ENCODE measurements at regions of chr1 and their contacts with region 1.

Region 1: DNA sequence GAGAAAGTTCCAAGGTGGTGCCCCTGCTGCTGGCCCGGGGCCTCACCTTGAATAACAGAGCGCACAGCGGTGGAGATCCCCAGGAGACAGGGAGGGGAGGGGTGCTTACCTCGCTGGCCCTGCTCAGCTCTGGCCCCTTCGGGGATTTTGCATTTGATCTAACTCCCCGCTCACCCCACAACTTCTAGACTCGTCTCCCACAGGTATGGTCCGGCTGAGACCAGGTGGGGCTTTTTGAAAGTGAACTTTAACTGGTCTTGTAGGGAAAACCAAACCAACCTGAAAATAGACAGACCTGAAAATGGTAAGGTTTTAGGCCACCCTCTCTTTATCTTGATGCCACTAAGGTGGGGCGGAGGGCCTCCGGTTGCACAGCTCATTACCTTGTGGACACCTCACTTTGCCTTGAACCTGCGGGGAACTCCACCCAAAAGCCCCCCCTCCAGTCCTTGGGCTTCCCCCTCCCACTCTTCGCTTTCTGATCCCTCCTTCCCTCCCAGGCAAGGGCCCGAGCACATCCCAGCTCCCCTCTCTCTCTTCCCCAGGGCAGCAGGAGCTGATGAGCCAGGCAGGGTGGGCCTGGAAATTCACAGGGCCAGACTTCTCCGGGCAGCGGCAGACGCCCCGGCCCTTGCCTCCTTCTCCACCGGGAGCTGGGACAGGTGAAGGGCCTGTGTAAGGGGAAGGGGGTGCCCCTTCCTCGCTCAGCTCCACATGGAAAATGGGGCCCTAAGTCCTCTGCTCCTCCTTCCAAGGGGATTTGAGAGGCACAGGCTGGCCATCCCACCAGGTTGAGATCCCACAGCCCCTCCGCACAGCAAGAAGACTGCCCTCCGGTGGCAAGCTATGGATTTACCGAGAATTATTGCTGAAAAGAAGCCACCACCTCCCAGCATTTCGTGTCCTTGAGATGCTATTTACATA is 16.1 kb downstream of the TNFRSF8 start:
- DNase-seq: peak; percentile 37
- H3K4me3 ChIP-seq: no peak overlapping the region
- H3K27ac ChIP-seq: no peak overlapping the region
- H3K4me1 ChIP-seq: no peaks in the 10 kb centered on the region
- H3K27me3 ChIP-seq: peaks cover 0 to 7% of the 10 kb centered on the region in 2 experiments
- CTCF ChIP-seq: peak; percentile 59 to 72
- POLR2A ChIP-seq: no peak

Region 2: DNA sequence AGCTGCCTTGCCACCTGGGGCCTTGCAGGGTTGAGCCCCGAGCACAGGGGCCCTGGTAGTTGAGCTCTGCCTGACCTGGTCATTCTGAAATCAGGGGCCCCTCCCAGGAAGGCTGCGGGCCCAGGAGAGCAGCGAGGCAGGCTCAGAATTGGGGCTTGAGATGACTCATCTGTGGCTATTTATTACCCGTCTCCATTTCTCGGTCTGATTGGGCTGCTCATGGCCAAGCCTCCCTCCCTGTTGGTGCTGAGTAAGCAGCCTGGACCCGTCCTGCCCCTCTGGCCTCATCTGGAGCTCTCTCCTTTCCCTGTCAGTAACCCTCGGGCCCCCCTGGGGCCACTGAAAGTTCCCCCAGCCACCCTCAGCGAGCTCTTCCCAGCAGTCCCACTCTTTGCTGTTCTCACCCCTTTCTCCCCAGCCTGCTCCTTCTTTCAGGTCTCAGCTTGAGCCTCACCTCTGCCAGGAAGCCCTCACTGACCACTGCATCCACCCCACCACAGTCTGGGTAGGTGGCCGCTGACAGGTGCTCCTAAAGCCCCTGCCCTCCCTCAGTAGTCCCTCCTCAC is 27.1 kb before region 1 on chr1:
- CTCF ChIA-PET with region 1: interaction called, 13 read pairs
- POLR2A ChIA-PET with region 1: no interaction called
- dilution Hi-C with region 1: no loop called
- intact Hi-C with region 1: no loop called
- DNase-seq: no peak
- H3K4me3 ChIP-seq: no peak overlapping the region
- H3K27ac ChIP-seq: no peak overlapping the region
- H3K4me1 ChIP-seq: no peaks in the 10 kb centered on the region
- H3K27me3 ChIP-seq: no peaks in the 10 kb centered on the region
- CTCF ChIP-seq: no peak
- POLR2A ChIP-seq: no peak

Region 3: GRCh38 chr1:12067900-12068821 is 11.0 kb before region 1 on chr1:
- CTCF ChIA-PET with region 1: interaction called, 17 read pairs
- POLR2A ChIA-PET with region 1: no interaction called
- dilution Hi-C with region 1: no loop called
- intact Hi-C with region 1: no loop called
- DNase-seq: no peak
- H3K4me3 ChIP-seq: no peak overlapping the region
- H3K27ac ChIP-seq: no peak overlapping the region
- H3K4me1 ChIP-seq: no peaks in the 10 kb centered on the region
- H3K27me3 ChIP-seq: peaks cover 26 to 29% of the 10 kb centered on the region in 2 experiments
- CTCF ChIP-seq: no peak
- POLR2A ChIP-seq: no peak